CD8-positive, alpha-beta T cell (primary cell): ENCODE measurements at regions of chr18 and their contacts with region 1.

Region 1: GRCh38 chr18:12883684-12884405 is at the start of gene PTPN2:
- DNase-seq: peak; percentile 78 to 98 (median 91)
- ATAC-seq: peak; percentile 86
- H3K4me3 ChIP-seq: peak within 1 kb of the TSS; percentile 77 to 95
- H3K4me3 Mint-ChIP-seq: peak within 1 kb of the TSS; percentile 88
- H3K27ac ChIP-seq: peak within 1 kb of the TSS; percentile 99 to 100
- H3K27ac Mint-ChIP-seq: peak within 1 kb of the TSS; percentile 94
- H3K4me1 ChIP-seq: peaks cover 49% of the 10 kb centered on the region
- H3K4me1 Mint-ChIP-seq: peaks cover 58% of the 10 kb centered on the region
- H3K27me3 ChIP-seq: no peaks in the 10 kb centered on the region
- H3K27me3 Mint-ChIP-seq: no peaks in the 10 kb centered on the region
- CTCF ChIP-seq: no peak
- total RNA-seq, gene PTPN2: 61.7 to 62.8 TPM

Region 2: GRCh38 chr18:11908182-11909060 is 975.4 kb before region 1 on chr18 and contains the start of gene MPPE1:
- CTCF ChIA-PET with region 1: no interaction called
- POLR2A ChIA-PET with region 1: no interaction called
- intact Hi-C with region 1: loop called in 1 of 2 experiments (anchors 10 kb)
- DNase-seq: peak; percentile 69 to 93 (median 84)
- ATAC-seq: peak; percentile 90
- H3K4me3 ChIP-seq: peak within 1 kb of the TSS; percentile 85 to 100
- H3K4me3 Mint-ChIP-seq: peak within 1 kb of the TSS; percentile 96
- H3K27ac ChIP-seq: peak within 1 kb of the TSS; percentile 92 to 95
- H3K27ac Mint-ChIP-seq: peak within 1 kb of the TSS; percentile 96
- H3K4me1 ChIP-seq: peaks cover 11% of the 10 kb centered on the region
- H3K4me1 Mint-ChIP-seq: peaks cover 36% of the 10 kb centered on the region
- H3K27me3 ChIP-seq: no peaks in the 10 kb centered on the region
- H3K27me3 Mint-ChIP-seq: no peaks in the 10 kb centered on the region
- CTCF ChIP-seq: no peak
- total RNA-seq, gene MPPE1: 44.0 to 55.1 TPM

Region 3: DNA sequence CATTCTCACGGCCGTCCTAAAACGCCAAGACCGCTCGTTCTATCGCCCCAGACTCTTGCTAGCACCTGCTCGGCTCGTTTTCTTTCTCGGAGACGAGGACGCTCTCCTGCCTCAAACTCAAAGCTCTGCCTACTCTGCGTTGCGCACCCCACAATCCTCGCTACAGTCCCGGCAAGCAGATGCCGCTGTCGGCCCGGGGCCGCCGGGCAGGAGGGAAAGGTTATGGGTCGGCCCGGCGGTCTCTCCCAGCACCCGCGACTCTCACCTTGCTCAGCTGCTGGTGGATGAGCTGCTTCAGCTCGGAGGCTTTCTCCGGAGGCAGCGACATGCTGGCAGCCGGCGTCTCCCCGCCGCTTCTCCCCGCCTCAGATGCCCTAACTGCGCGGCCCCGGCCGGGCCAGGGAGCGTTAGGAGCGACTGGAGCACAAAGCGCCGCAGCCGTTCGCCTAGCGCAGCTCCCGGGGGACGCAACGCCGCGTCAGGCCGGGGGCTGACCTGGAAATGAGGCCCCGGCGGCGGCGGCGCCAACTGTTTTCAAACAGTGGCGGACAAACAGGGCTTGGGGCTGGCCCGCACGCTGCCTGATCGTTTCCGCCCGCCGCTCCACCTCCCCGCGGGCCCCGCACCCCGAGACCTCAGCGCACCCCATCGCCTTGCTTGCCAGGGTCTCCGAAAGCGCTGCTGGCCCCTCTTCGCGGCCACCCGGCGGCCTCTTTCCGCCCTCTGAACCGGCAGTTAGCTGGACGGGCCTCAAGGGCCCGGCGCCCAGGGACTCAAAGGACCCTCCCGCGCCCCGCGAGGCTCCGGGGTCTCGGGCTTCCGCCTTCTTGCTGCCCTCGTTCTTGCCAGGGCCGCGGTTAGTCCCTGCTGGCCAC is 181.4 kb before region 1 on chr18 and contains the starts of genes CEP76 and PSMG2:
- CTCF ChIA-PET with region 1: no interaction called
- POLR2A ChIA-PET with region 1: interaction called, 12 read pairs
- intact Hi-C with region 1: loop called (anchors 1 kb)
- DNase-seq: peak; percentile 68 to 91 (median 83)
- ATAC-seq: peak; percentile 78
- H3K4me3 ChIP-seq: peak within 1 kb of the TSS; percentile 70 to 96
- H3K4me3 Mint-ChIP-seq: peak within 1 kb of the TSS; percentile 96
- H3K27ac ChIP-seq: peak within 1 kb of the TSS; percentile 95 to 98
- H3K27ac Mint-ChIP-seq: peak within 1 kb of the TSS; percentile 100
- H3K4me1 ChIP-seq: peaks cover 30% of the 10 kb centered on the region
- H3K4me1 Mint-ChIP-seq: peaks cover 52% of the 10 kb centered on the region
- H3K27me3 ChIP-seq: no peaks in the 10 kb centered on the region
- H3K27me3 Mint-ChIP-seq: no peaks in the 10 kb centered on the region
- CTCF ChIP-seq: no peak
- total RNA-seq, gene CEP76: 10.9 to 11.0 TPM
- total RNA-seq, gene PSMG2: 80.3 to 81.7 TPM

Region 4: GRCh38 chr18:12839526-12840196 is 44.2 kb before region 1 on chr18:
- CTCF ChIA-PET with region 1: interaction called, 3 read pairs
- POLR2A ChIA-PET with region 1: interaction called, 5 read pairs
- intact Hi-C with region 1: loop called (anchors 2 to 5 kb)
- DNase-seq: peak in 2 of 9 experiments; percentile 61 to 80
- ATAC-seq: peak; percentile 74
- H3K4me3 ChIP-seq: peak overlapping the region; percentile 13 to 26
- H3K4me3 Mint-ChIP-seq: peak overlapping the region; percentile 67
- H3K27ac ChIP-seq: peak overlapping the region; percentile 31 to 78
- H3K27ac Mint-ChIP-seq: peak overlapping the region; percentile 82
- H3K4me1 ChIP-seq: peaks cover 46% of the 10 kb centered on the region
- H3K4me1 Mint-ChIP-seq: peaks cover 61% of the 10 kb centered on the region
- H3K27me3 ChIP-seq: no peaks in the 10 kb centered on the region
- H3K27me3 Mint-ChIP-seq: no peaks in the 10 kb centered on the region
- CTCF ChIP-seq: no peak

Region 5: DNA sequence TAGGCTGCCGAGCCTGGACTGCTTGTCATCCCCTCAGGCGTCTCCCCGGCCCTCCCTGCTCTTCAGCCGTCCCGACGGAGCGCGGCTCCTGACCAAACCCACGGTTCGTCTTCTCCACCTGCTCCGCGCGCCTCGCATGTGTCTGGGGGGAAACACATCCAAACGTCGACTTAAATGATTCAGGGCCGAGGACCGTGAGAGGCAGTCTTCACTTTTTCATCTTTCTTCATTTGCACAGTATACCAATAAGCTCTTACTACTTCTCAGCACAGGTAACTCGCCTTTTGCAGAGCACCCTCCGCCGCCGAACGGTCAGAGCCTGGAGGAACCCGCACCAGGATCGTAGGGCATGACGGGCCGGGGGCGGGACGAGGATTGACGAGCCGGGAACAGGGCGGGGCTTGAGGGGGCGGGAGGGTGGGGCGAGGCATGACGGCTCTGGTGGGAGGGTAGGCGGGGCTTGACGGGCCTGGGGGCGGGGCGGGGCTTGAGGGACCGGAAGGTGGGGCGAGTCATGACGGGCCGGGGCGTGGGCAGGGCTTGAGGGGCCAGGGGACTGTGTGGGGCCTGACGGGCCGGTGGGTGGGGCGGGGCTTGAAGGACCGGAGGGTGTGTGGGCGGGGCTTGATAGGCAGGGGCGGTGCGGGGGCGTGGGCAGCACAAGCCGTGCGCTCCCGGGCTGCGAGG is 63.7 kb after region 1 on chr18 and contains the start of gene SEH1L:
- CTCF ChIA-PET with region 1: no interaction called
- POLR2A ChIA-PET with region 1: interaction called, 14 read pairs
- intact Hi-C with region 1: loop called (anchors 1 kb)
- DNase-seq: peak; percentile 97 to 99 (median 99)
- ATAC-seq: peak; percentile 82
- H3K4me3 ChIP-seq: peak within 1 kb of the TSS; percentile 66 to 91
- H3K4me3 Mint-ChIP-seq: peak within 1 kb of the TSS; percentile 96
- H3K27ac ChIP-seq: peak within 1 kb of the TSS; percentile 83 to 85
- H3K27ac Mint-ChIP-seq: peak within 1 kb of the TSS; percentile 99
- H3K4me1 ChIP-seq: peaks cover 22% of the 10 kb centered on the region
- H3K4me1 Mint-ChIP-seq: peaks cover 39% of the 10 kb centered on the region
- H3K27me3 ChIP-seq: no peaks in the 10 kb centered on the region
- H3K27me3 Mint-ChIP-seq: no peaks in the 10 kb centered on the region
- CTCF ChIP-seq: no peak
- total RNA-seq, gene SEH1L: 23.9 to 27.6 TPM

Region 6: GRCh38 chr18:13137670-13138419 is 254.0 kb after region 1 on chr18:
- CTCF ChIA-PET with region 1: interaction called, 3 read pairs
- POLR2A ChIA-PET with region 1: interaction called, 5 read pairs
- intact Hi-C with region 1: loop called (anchors 2 to 5 kb)
- DNase-seq: peak; percentile 28 to 90 (median 61)
- ATAC-seq: peak; percentile 73
- H3K4me3 ChIP-seq: peak overlapping the region; percentile 84 to 98
- H3K4me3 Mint-ChIP-seq: peak overlapping the region; percentile 94
- H3K27ac ChIP-seq: peak overlapping the region; percentile 87 to 90
- H3K27ac Mint-ChIP-seq: peak overlapping the region; percentile 96
- H3K4me1 ChIP-seq: peaks cover 20% of the 10 kb centered on the region
- H3K4me1 Mint-ChIP-seq: peaks cover 28% of the 10 kb centered on the region
- H3K27me3 ChIP-seq: no peaks in the 10 kb centered on the region
- H3K27me3 Mint-ChIP-seq: no peaks in the 10 kb centered on the region
- CTCF ChIP-seq: no peak

Region 7: GRCh38 chr18:13289481-13290205 is 405.8 kb after region 1 on chr18:
- CTCF ChIA-PET with region 1: no interaction called
- POLR2A ChIA-PET with region 1: no interaction called
- intact Hi-C with region 1: no loop called
- DNase-seq: no peak
- ATAC-seq: no peak
- H3K4me3 ChIP-seq: no peak overlapping the region
- H3K4me3 Mint-ChIP-seq: no peak overlapping the region
- H3K27ac ChIP-seq: no peak overlapping the region
- H3K27ac Mint-ChIP-seq: peak overlapping the region; percentile 50
- H3K4me1 ChIP-seq: no peaks in the 10 kb centered on the region
- H3K4me1 Mint-ChIP-seq: peaks cover 46% of the 10 kb centered on the region
- H3K27me3 ChIP-seq: no peaks in the 10 kb centered on the region
- H3K27me3 Mint-ChIP-seq: no peaks in the 10 kb centered on the region
- CTCF ChIP-seq: no peak